PC-3 (cell line): ENCODE measurements at regions of chr19 and their contacts with region 1.

Region 1: GRCh38 chr19:46904114-46905060 is 43.6 kb downstream of the ARHGAP35 start:
- DNase-seq: no peak
- ATAC-seq: no peak
- H3K4me3 ChIP-seq: no peak overlapping the region
- H3K27ac ChIP-seq: 0 out of 2 replicates have a peak overlapping the region, but pooled peaks have one; percentile 19
- H3K4me1 ChIP-seq: peaks cover 44% of the 10 kb centered on the region
- H3K27me3 ChIP-seq: no peaks in the 10 kb centered on the region
- CTCF ChIP-seq: no peak

Region 2: DNA sequence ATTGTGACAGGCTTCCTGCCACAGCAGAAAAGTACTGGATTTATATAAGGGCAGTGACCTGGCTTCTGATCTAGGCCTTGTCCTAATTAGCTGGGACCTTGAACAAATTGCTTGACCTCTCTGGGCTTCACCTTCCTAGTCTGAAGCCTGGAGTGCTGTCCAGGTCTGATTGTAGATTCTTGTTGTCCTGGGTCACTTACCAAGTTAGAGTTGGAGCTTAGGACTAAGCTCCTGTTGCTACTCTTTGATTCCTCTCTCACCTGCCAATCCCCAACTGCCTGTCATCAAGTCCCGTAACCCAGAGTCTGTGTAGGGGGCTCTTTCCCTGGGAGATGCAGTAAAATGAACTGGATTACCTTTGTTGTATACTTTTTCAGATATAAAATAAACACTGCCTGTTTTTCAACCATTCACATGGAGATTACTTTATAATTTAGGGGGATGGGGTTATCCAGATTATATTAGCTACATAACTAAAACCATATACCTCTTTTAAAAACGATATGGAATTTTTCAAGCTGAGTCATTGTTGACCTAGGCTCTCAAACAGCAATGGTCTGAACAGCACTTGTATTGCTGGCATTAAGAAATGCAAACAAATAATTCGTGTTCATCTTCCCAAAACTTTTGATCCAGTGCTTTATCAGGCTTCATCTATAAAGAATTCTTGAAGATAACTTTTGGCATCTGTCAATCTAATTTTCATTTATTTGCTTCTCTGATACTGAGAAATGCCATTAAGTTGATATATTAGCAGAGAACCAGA is 37.8 kb before region 1 on chr19:
- CTCF ChIA-PET with region 1: no interaction called
- POLR2A ChIA-PET with region 1: no interaction called
- intact Hi-C with region 1: loop called (anchors 5 kb)
- DNase-seq: peak; percentile 84
- ATAC-seq: peak; percentile 66
- H3K4me3 ChIP-seq: peak overlapping the region; percentile 43
- H3K27ac ChIP-seq: peak overlapping the region; percentile 75
- H3K4me1 ChIP-seq: peaks cover 61% of the 10 kb centered on the region
- H3K27me3 ChIP-seq: no peaks in the 10 kb centered on the region
- CTCF ChIP-seq: no peak